Esophagus muscularis mucosa (tissue), 4 donors: ENCODE measurements at regions of chr14 and their contacts with region 1.

Region 1: DNA sequence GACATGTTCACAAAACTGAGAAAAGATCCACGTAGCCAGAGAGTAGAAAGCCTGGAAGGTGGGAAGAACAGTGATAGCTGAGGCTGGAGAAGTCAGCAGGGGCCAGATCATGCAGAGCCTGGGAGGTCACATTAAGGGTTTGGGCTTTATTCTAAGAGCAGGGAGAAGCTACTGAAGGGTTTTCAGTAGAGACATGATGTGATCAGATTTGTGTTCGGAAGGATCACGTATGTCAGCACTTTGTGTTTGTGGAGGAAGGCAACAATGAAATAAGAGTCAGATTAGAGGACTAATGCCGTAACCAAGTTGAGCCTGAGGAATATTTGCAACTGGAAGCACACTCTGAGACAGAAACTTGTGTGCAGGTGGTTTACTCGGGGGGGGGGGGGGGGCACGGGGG is 4.2 kb upstream of the PCK2 start:
- DNase-seq: no peak
- H3K4me3 ChIP-seq: no peak overlapping the region
- H3K27ac ChIP-seq: no peak overlapping the region
- H3K4me1 ChIP-seq: peaks cover 11 to 18% (median 16%) of the 10 kb centered on the region in 4 donors
- H3K27me3 ChIP-seq: no peaks in the 10 kb centered on the region
- CTCF ChIP-seq: no peak
- EP300 ChIP-seq: no peak
- POLR2A ChIP-seq: no peak

Region 2: DNA sequence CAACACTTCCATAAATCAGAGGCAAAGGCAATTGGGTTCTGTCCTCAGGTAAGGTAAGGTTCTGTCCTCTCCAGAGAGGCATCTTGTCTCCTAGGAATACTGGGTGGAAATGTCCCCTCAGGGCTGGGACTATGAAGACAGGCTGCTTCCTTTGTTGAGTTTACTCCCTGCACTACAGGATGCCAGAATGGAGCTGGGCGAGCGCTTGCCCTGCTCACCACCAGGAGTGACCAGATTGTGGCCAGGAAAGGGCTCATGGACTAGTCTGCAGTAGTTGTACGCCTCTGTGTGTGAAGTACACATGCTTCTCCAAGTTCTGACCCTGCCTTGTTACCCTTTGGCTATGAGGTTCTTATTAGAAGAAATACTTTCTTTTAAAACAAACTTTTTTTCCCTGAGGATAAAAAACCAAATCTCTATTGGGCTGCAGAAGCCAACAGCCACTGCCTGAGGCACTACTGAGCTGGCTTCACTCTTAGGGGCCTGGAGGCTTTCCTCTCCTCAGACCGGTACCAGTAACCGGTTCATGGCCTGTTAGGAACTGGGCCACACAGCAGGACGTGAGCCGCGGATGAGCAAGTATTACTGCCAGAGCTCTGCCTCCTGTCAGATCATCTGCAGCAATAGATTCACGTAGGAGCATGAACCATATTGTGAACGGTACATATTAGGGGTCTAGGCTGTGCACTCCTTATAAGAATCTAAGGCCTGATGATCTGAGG is 370.5 kb before region 1 on chr14:
- intact Hi-C with region 1: no loop called
- DNase-seq: no peak
- H3K4me3 ChIP-seq: no peak overlapping the region
- H3K27ac ChIP-seq: no peak overlapping the region
- H3K4me1 ChIP-seq: no peaks in the 10 kb centered on the region
- H3K27me3 ChIP-seq: no peaks in the 10 kb centered on the region
- CTCF ChIP-seq: no peak
- EP300 ChIP-seq: no peak
- POLR2A ChIP-seq: no peak

Region 3: DNA sequence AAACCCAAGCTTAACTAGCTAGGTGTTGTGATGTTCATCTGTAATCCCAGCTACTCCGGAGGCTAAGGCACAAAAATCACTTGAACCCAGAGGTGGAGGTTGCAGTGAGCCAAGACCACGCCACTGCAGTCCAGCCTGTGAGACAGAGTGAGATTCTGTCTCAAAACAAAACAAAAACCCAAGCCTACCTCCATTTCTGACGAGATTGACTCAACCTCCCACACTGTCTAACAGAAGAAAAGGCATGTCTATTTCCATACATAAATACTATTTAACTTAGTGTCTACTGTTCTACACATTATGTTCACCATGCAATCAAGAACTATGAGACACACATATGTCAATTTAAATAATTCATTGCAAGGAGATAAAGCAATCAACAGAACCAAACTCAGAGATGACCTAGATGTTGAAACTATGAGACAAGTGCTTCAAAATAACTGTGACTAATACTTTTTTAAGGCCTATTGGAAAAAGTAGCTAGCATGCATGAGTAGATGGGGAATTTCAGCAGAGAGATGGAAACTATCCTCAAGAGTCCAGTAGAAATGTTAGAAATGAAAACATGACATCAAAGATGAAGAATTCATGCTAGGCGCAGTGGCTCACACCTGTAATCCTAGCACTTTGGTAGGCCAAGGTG is 212.2 kb before region 1 on chr14:
- intact Hi-C with region 1: no loop called
- DNase-seq: no peak
- H3K4me3 ChIP-seq: no peak overlapping the region
- H3K27ac ChIP-seq: no peak overlapping the region
- H3K4me1 ChIP-seq: no peaks in the 10 kb centered on the region
- H3K27me3 ChIP-seq: no peaks in the 10 kb centered on the region
- CTCF ChIP-seq: no peak
- EP300 ChIP-seq: no peak
- POLR2A ChIP-seq: no peak

Region 4: DNA sequence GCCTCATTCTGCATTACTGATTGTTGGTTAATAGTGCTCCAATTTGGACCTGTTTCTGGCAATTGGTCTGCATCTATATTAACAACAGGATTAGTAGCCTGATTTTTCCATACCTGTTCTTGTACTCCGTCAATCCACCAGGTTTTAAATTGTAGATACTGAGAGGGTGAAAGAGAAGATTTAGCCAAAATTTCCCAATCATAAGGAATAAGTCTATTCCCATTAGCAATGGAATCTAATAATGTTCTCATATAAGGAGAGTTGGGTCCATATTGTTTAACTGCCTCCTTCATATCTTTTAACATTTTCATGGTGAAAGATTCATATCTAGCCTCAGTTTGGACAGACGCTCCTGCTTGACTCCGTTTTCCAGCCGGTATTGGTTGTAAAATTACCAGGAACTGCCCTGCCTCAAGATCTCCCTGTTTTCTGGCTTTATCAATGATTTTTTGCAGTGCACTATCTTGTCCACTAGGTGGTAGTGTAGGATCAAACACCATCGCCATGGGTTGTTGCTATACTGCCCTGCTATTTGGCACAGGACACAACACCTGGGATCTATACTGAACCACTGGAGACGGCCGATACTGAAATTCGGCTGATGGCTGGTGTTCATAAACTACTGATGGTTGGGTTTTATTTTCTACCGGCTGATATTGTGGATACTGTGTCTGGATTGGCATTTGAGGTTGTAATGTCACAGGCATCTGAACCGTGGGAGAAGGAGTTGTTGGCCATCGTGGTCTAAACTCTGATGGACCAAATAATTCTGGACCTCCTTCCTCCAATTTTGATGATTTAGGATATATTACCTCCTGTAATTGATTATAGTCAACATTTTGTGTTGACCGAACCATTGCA is 76.0 kb before region 1 on chr14:
- intact Hi-C with region 1: loop called (anchors 2 kb)
- DNase-seq: no peak
- H3K4me3 ChIP-seq: no peak overlapping the region
- H3K27ac ChIP-seq: no peak overlapping the region
- H3K4me1 ChIP-seq: peaks cover 0 to 17% (median 5%) of the 10 kb centered on the region in 4 donors
- H3K27me3 ChIP-seq: no peaks in the 10 kb centered on the region
- CTCF ChIP-seq: peak; percentile 86 to 94 (median 88)
- EP300 ChIP-seq: no peak
- POLR2A ChIP-seq: no peak

Region 5: GRCh38 chr14:24058260-24058950 is 31.5 kb before region 1 on chr14:
- intact Hi-C with region 1: loop called (anchors 2 kb)
- DNase-seq: peak; percentile 96
- H3K4me3 ChIP-seq: no peak overlapping the region
- H3K27ac ChIP-seq: no peak overlapping the region
- H3K4me1 ChIP-seq: peaks cover 0 to 9% (median 4%) of the 10 kb centered on the region in 4 donors
- H3K27me3 ChIP-seq: peaks cover 0 to 16% (median 0%) of the 10 kb centered on the region in 4 donors
- CTCF ChIP-seq: peak; percentile 88 to 93 (median 91)
- EP300 ChIP-seq: no peak
- POLR2A ChIP-seq: no peak

Region 6: DNA sequence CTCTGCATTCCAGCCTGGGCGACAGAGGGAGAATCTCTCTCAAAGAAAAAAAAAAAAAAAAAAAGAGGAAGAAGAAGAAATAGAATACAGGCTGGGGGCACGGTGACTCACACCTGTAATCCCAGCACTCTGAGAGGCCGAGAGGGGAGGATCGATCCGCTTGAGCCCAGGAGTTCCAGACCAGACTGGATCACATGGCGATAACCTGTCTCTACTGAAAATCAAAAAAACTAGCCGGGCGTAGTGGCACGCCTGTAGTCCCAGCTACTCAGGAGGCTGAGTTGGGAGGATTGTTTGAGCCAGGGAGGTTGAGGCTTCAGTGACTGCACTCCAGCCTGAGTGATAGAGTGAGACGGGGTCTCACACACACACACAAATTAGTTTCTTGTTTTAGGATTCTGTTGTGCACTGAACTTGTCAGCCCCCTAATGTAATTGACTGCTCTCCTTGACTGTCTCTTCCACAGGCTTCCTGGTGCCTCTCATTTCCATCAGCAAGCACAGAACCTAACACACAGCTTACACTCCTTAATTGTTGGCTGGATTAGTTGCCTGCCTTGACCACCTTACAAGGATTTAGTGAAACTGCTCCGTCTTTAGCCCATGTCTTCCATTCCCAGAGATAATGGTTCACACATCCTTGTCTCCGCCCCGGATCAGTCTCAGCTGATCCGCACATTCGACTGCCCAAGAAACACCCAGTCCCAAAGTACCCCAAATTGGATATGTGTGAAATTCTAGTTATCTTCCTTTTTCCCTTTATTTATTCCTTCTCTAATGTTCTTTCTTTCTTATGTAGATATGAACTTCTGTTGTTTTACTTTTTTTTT is 153.7 kb after region 1 on chr14:
- intact Hi-C with region 1: no loop called
- DNase-seq: no peak
- H3K4me3 ChIP-seq: peak overlapping the region; percentile 65 to 83 (median 74)
- H3K27ac ChIP-seq: peak overlapping the region; percentile 94 to 99 (median 97)
- H3K4me1 ChIP-seq: peaks cover 39 to 45% (median 44%) of the 10 kb centered on the region in 4 donors
- H3K27me3 ChIP-seq: no peaks in the 10 kb centered on the region
- CTCF ChIP-seq: no peak
- EP300 ChIP-seq: no peak
- POLR2A ChIP-seq: no peak